Activated B cell treated with CpG ODN at 0.5 μM for 24 hours (primary cell): ENCODE measurements at regions of chr22 and their contacts with region 1.

Region 1: DNA sequence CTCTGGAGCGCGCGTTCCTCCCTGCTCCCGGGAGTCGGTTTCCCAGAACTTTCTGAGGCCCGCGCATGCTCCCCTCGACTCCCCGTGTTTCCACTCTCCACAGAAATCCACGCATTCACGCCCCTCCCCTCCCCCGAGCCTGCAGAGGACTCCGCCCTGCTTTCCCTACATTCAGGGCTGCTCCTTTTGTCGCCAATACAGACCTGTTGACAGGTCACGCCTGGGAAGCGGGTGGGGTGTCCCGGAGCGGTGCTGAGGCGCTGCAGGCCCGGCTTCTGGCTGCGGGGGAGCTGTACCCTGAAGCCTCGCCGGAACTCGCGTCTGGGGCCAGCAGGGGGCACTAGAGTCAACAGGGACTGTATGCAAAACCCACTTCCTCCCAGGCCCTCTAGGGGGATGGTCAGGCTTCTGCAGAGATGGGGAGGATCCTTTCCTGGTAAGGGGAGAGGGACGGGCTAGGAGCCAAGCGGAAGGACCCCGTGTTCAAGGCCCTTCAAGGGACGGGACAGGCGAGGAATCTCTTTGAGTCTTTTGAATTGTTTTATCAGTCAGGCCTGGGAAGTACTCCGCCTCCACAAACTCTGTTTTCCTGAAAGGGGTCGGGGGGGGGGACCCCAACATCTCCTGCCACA is at the start of gene PRAME:
- DNase-seq: peak; percentile 62
- ATAC-seq: peak; percentile 92
- H3K4me3 Mint-ChIP-seq: peak within 1 kb of the TSS; percentile 11
- H3K27ac Mint-ChIP-seq: no peak within 1 kb of the TSS
- H3K4me1 Mint-ChIP-seq: peaks cover 9% of the 10 kb centered on the region
- H3K27me3 Mint-ChIP-seq: no peaks in the 10 kb centered on the region
- CTCF ChIP-seq: no peak
- total RNA-seq, gene PRAME: 0.12 TPM in 1 of 2 replicates, not detected in the other

Region 2: GRCh38 chr22:22479999-22480532 is 79.0 kb before region 1 on chr22:
- CTCF ChIA-PET with region 1: no interaction called
- POLR2A ChIA-PET with region 1: no interaction called
- intact Hi-C with region 1: loop called (anchors 10 kb)
- DNase-seq: no peak
- ATAC-seq: no peak
- H3K4me3 Mint-ChIP-seq: no peak overlapping the region
- H3K27ac Mint-ChIP-seq: no peak overlapping the region
- H3K4me1 Mint-ChIP-seq: peaks cover 5% of the 10 kb centered on the region
- H3K27me3 Mint-ChIP-seq: no peaks in the 10 kb centered on the region
- CTCF ChIP-seq: no peak